B cell (primary cell): ENCODE measurements at regions of chr4 and their contacts with region 1.

Region 1: DNA sequence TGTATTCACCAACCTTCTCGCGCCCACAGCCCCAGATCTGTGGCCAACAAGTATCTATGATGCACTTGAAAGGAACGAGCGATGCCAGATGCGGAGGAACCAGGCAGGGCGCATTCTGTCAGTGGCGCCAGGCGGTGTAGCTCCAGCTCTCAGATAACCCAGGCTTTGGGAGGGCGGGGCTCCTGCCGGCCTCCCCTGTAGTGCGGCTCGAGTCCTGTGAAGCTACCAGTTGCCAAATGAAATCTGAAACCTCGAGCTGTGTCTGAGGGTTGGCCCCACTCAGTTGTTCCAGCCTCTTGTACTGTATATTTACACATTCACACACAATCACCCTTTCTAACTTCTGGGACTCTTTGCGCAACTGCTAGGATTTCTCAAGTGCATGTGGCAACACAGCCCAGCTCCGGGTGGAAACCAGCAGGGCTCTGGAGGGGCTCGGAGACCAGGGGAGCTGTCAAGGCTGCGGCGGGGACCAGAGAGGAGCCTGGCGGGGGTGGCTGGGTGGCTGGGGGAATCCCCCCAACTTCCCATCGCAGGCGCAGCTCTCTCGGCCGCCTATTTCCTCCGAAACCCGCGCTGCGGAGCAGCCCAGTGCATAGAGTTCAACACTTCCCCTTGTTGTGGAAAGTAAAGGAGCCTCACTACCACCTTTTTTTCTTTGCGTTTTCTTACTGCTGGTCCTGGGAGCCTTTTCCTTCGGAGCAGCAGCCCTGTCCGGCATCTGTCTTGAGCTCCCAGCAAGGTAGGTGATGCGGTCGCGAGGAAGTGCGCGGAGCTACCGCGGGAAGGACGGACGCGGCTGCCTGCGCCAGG is at the start of gene ARHGAP24:
- DNase-seq: peak; percentile 91
- ATAC-seq: peak; percentile 83
- H3K4me3 ChIP-seq: peak within 1 kb of the TSS; percentile 62 to 86 (median 72)
- H3K4me3 Mint-ChIP-seq: peak within 1 kb of the TSS; percentile 98
- H3K27ac ChIP-seq: peak within 1 kb of the TSS; percentile 91
- H3K27ac Mint-ChIP-seq: peak within 1 kb of the TSS; percentile 99
- H3K4me1 ChIP-seq: peaks cover 34 to 37% of the 10 kb centered on the region in 2 donors
- H3K4me1 Mint-ChIP-seq: peaks cover 51% of the 10 kb centered on the region
- H3K27me3 ChIP-seq: no peaks in the 10 kb centered on the region
- H3K27me3 Mint-ChIP-seq: no peaks in the 10 kb centered on the region
- CTCF ChIP-seq: no peak
- total RNA-seq, gene ARHGAP24: 141 and 156 TPM in 2 replicates

Region 2: GRCh38 chr4:85391589-85392410 is 83.2 kb before region 1 on chr4:
- CTCF ChIA-PET with region 1: no interaction called
- POLR2A ChIA-PET with region 1: no interaction called
- intact Hi-C with region 1: loop called (anchors 5 kb)
- DNase-seq: no peak
- ATAC-seq: peak; percentile 58
- H3K4me3 ChIP-seq: no peak overlapping the region
- H3K4me3 Mint-ChIP-seq: peak overlapping the region; percentile 30
- H3K27ac ChIP-seq: no peak overlapping the region
- H3K27ac Mint-ChIP-seq: peak overlapping the region; percentile 80
- H3K4me1 ChIP-seq: peaks cover 30 to 37% of the 10 kb centered on the region in 2 donors
- H3K4me1 Mint-ChIP-seq: peaks cover 28% of the 10 kb centered on the region
- H3K27me3 ChIP-seq: no peaks in the 10 kb centered on the region
- H3K27me3 Mint-ChIP-seq: no peaks in the 10 kb centered on the region
- CTCF ChIP-seq: no peak

Region 3: DNA sequence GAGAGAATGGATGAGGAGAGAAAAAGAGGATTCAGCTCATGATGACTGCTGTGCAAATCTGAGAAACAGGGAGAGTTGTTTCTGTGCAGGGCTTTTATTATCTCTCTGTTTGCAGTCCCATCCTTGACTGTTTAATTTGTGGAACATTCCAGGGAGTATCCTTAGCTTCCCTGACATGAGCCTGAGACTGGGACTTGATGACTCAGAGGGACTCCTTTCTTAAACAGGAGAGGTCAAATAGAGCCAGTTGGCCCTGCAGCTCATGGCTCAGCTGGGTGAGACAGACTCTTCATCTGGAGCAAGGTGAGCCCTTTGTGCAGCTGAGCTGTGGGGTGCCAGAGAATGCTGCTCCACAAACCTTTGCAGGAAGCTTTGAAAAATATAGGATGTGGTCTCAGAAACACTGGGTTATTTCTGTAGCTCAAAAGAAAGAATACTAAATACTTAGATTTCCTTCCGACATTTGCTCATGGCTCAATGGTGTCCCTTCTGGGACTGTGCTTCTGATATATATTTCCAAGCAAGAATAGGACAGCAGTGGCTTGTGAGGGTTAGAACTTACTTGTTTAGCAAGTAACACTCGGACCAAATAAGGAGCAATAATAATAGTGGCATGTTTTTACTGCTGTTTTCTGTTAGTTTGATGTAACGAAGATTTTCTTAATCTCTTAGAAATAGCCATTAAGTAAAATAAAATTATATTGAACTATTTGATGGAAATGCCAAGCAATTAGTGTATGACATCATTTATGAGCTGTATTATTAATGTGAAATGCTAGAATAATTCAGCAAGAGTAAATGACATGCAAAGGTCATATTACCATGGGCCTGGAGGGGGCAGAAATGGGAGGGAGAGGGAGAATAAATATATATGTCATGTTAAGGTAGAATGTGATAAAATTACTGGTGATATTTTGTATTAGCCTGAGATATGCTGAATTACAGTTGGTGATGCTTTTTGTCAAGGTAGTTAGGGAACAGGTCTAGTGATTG is 14.5 kb after region 1 on chr4:
- CTCF ChIA-PET with region 1: interaction called, 4 read pairs
- POLR2A ChIA-PET with region 1: interaction called, 3 read pairs
- intact Hi-C with region 1: loop called (anchors 2 kb)
- DNase-seq: peak; percentile 28
- ATAC-seq: no peak
- H3K4me3 ChIP-seq: no peak overlapping the region
- H3K4me3 Mint-ChIP-seq: no peak overlapping the region
- H3K27ac ChIP-seq: peak overlapping the region in 1 of 2 donors; percentile 81
- H3K27ac Mint-ChIP-seq: peak overlapping the region; percentile 79
- H3K4me1 ChIP-seq: peaks cover 24 to 31% of the 10 kb centered on the region in 2 donors
- H3K4me1 Mint-ChIP-seq: peaks cover 50% of the 10 kb centered on the region
- H3K27me3 ChIP-seq: no peaks in the 10 kb centered on the region
- H3K27me3 Mint-ChIP-seq: no peaks in the 10 kb centered on the region
- CTCF ChIP-seq: peak; percentile 21

Region 4: DNA sequence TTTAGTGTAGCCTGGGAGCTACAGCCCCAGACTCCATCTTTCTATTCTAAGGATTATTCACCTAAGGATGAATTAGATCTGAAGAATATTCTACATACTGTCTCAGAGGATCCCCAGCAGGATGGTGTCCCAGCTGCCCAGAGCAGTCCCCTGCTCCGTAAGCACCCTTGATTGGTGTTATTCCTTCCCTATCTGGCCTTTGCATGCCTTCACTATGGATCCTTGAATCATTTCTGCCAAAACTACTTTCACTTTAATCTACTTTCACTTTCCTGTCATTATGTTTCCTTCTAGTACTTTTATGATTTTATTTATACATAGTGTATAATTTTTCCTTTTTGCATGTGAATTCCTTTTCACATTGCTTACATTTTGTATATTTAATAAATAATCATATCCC is 39.1 kb after region 1 on chr4:
- CTCF ChIA-PET with region 1: no interaction called
- POLR2A ChIA-PET with region 1: no interaction called
- intact Hi-C with region 1: loop called (anchors 5 kb)
- DNase-seq: no peak
- ATAC-seq: no peak
- H3K4me3 ChIP-seq: peak overlapping the region in 1 of 5 experiments; percentile 26
- H3K4me3 Mint-ChIP-seq: peak overlapping the region; percentile 56
- H3K27ac ChIP-seq: no peak overlapping the region
- H3K27ac Mint-ChIP-seq: peak overlapping the region; percentile 39
- H3K4me1 ChIP-seq: peaks cover 24 to 31% of the 10 kb centered on the region in 2 donors
- H3K4me1 Mint-ChIP-seq: peaks cover 35% of the 10 kb centered on the region
- H3K27me3 ChIP-seq: no peaks in the 10 kb centered on the region
- H3K27me3 Mint-ChIP-seq: no peaks in the 10 kb centered on the region
- CTCF ChIP-seq: no peak

Region 5: GRCh38 chr4:85557016-85557901 is 82.2 kb after region 1 on chr4:
- CTCF ChIA-PET with region 1: no interaction called
- POLR2A ChIA-PET with region 1: interaction called, 10 read pairs
- intact Hi-C with region 1: loop called (anchors 2 kb)
- DNase-seq: peak; percentile 93
- ATAC-seq: peak; percentile 86
- H3K4me3 ChIP-seq: peak overlapping the region in 2 of 5 experiments; percentile 12 to 14
- H3K4me3 Mint-ChIP-seq: peak overlapping the region; percentile 66
- H3K27ac ChIP-seq: peak overlapping the region; percentile 92 to 95
- H3K27ac Mint-ChIP-seq: peak overlapping the region; percentile 96
- H3K4me1 ChIP-seq: peaks cover 61 to 62% of the 10 kb centered on the region in 2 donors
- H3K4me1 Mint-ChIP-seq: peaks cover 72% of the 10 kb centered on the region
- H3K27me3 ChIP-seq: no peaks in the 10 kb centered on the region
- H3K27me3 Mint-ChIP-seq: no peaks in the 10 kb centered on the region
- CTCF ChIP-seq: no peak

Region 6: GRCh38 chr4:85603437-85604336 is 128.7 kb after region 1 on chr4:
- CTCF ChIA-PET with region 1: no interaction called
- POLR2A ChIA-PET with region 1: no interaction called
- intact Hi-C with region 1: loop called (anchors 2 kb)
- DNase-seq: peak; percentile 72
- ATAC-seq: peak; percentile 42
- H3K4me3 ChIP-seq: peak overlapping the region in 1 of 5 experiments; percentile 6
- H3K4me3 Mint-ChIP-seq: peak overlapping the region; percentile 62
- H3K27ac ChIP-seq: peak overlapping the region; percentile 60 to 91
- H3K27ac Mint-ChIP-seq: peak overlapping the region; percentile 86
- H3K4me1 ChIP-seq: peaks cover 45 to 46% of the 10 kb centered on the region in 2 donors
- H3K4me1 Mint-ChIP-seq: peaks cover 40% of the 10 kb centered on the region
- H3K27me3 ChIP-seq: no peaks in the 10 kb centered on the region
- H3K27me3 Mint-ChIP-seq: no peaks in the 10 kb centered on the region
- CTCF ChIP-seq: no peak

Region 7: DNA sequence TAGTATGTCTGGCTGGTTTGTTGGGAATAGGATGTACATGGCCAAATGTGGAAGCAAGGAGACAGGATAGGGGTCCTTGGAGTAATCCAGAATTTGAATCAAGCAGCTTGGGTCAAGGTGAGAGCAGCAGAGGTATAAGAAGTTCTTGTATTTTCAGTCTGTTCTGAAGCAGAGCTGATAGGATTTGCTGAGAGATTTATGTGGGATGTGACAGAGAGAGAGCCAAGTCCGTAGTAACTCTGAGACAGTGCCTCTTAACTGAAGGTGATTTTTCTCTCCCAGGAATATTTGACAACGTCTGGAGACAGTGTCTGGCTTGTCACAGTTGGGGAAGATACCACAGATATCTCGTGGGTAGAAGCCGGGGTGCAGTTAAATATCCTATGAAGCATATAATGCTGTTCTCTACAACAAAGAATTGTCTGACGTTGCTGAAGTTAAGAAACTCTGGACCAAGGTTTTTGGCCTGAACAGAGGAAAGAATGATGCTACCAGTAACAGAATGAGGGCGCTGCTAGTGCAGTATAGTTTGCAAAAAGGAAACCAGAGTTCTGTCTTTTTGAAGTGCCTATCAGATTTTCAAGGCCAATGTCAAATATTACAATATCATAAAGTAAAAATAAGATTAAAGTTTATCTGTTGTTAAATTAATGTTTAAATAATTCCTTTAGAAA is 183.9 kb after region 1 on chr4:
- CTCF ChIA-PET with region 1: no interaction called
- POLR2A ChIA-PET with region 1: interaction called, 3 read pairs
- intact Hi-C with region 1: loop called (anchors 5 kb)
- DNase-seq: peak; percentile 50
- ATAC-seq: peak; percentile 23
- H3K4me3 ChIP-seq: no peak overlapping the region
- H3K4me3 Mint-ChIP-seq: peak overlapping the region; percentile 59
- H3K27ac ChIP-seq: peak overlapping the region; percentile 62 to 81
- H3K27ac Mint-ChIP-seq: peak overlapping the region; percentile 86
- H3K4me1 ChIP-seq: peaks cover 38 to 46% of the 10 kb centered on the region in 2 donors
- H3K4me1 Mint-ChIP-seq: peaks cover 45% of the 10 kb centered on the region
- H3K27me3 ChIP-seq: no peaks in the 10 kb centered on the region
- H3K27me3 Mint-ChIP-seq: no peaks in the 10 kb centered on the region
- CTCF ChIP-seq: peak; percentile 16